ENCODE measurements at regions of chr17 and their contacts with region 1.

Region 1: GRCh38 chr17:17694169-17695081 is 13.2 kb downstream of the RAI1 start:
- DNase-seq: peak; percentile 79 to 84
- ATAC-seq: peak; percentile 73 to 79 (median 75)
- H3K4me3 ChIP-seq: peak overlapping the region; percentile 75
- H3K27ac ChIP-seq: peak overlapping the region; percentile 93
- H3K4me1 ChIP-seq: peaks cover 61% of the 10 kb centered on the region
- H3K27me3 ChIP-seq: no peaks in the 10 kb centered on the region
- CTCF ChIP-seq: no peak

Region 2: DNA sequence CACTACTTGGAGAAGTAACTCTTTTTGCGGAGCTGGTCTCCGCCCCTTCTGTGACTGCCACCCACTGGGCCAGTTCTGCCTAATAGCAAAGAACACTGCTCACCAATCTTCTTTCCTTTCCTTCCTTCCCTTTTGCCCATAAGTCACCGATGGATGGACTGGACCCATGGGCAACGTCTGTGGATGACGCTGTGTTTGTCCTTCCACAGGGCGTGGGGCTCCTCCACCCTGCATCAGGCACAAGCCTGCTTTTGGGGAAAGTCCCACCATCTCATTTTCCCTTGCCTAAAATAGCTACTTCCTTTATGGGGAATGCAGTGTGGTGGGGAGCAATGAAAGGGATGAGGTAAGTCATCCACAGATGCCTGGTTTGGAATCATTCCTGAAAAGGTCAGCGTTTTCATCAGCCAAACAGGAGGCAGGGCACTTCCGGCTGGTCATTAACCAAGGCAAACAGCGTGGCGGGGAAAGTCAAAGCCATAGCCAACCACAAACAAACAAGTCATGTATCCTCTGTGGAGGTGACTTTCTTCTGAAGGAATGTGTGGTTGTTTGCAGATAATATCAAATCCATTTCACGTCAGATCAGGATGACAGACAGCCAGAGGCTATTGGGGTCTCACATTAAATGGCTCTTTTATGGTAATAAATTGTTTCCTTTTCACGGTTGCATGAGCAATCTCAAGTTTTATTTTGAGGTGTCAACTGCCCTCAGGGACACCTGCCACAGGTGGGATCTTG is 248.3 kb before region 1 on chr17:
- intact Hi-C with region 1: no loop called
- DNase-seq: peak in 1 of 2 donors; percentile 61
- ATAC-seq: peak; percentile 37 to 66 (median 54)
- H3K4me3 ChIP-seq: no peak overlapping the region
- H3K27ac ChIP-seq: peak overlapping the region; percentile 30
- H3K4me1 ChIP-seq: no peaks in the 10 kb centered on the region
- H3K27me3 ChIP-seq: peaks cover 0 to 4% (median 0%) of the 10 kb centered on the region in 3 donors
- CTCF ChIP-seq: no peak

Region 3: GRCh38 chr17:17591355-17592298 is 102.8 kb before region 1 on chr17 and contains the start of gene PEMT:
- intact Hi-C with region 1: no loop called
- DNase-seq: peak; percentile 95 to 97
- ATAC-seq: peak; percentile 96 to 97 (median 96)
- H3K4me3 ChIP-seq: peak within 1 kb of the TSS; percentile 96
- H3K27ac ChIP-seq: peak within 1 kb of the TSS; percentile 92
- H3K4me1 ChIP-seq: peaks cover 16% of the 10 kb centered on the region
- H3K27me3 ChIP-seq: no peaks in the 10 kb centered on the region
- CTCF ChIP-seq: peak; percentile 5
- total RNA-seq, gene PEMT: 15.9 to 28.1 (median 21.7) TPM

Region 4: GRCh38 chr17:17739388-17740066 is 45.1 kb after region 1 on chr17:
- intact Hi-C with region 1: loop called in 1 of 2 experiments (anchors 5 kb)
- DNase-seq: no peak
- ATAC-seq: peak; percentile 36 to 73 (median 60)
- H3K4me3 ChIP-seq: no peak overlapping the region
- H3K27ac ChIP-seq: no peak overlapping the region
- H3K4me1 ChIP-seq: peaks cover 25% of the 10 kb centered on the region
- H3K27me3 ChIP-seq: no peaks in the 10 kb centered on the region
- CTCF ChIP-seq: no peak

Region 5: GRCh38 chr17:17752089-17752820 is 57.8 kb after region 1 on chr17:
- intact Hi-C with region 1: no loop called
- DNase-seq: peak; percentile 97 to 98
- ATAC-seq: peak; percentile 93 to 95 (median 94)
- H3K4me3 ChIP-seq: peak overlapping the region; percentile 74
- H3K27ac ChIP-seq: peak overlapping the region; percentile 85
- H3K4me1 ChIP-seq: peaks cover 26% of the 10 kb centered on the region
- H3K27me3 ChIP-seq: no peaks in the 10 kb centered on the region
- CTCF ChIP-seq: no peak

Region 6: GRCh38 chr17:17783116-17783824 is 88.8 kb after region 1 on chr17:
- intact Hi-C with region 1: loop called (anchors 2 to 10 kb)
- DNase-seq: peak; percentile 76 to 85
- ATAC-seq: peak; percentile 64 to 69 (median 68)
- H3K4me3 ChIP-seq: peak overlapping the region; percentile 72
- H3K27ac ChIP-seq: peak overlapping the region; percentile 88
- H3K4me1 ChIP-seq: peaks cover 33% of the 10 kb centered on the region
- H3K27me3 ChIP-seq: no peaks in the 10 kb centered on the region
- CTCF ChIP-seq: peak; percentile 17

Measured in psoas muscle (tissue), 8 donors.